ENCODE measurements at regions of chr15 and their contacts with region 1.

Region 1: DNA sequence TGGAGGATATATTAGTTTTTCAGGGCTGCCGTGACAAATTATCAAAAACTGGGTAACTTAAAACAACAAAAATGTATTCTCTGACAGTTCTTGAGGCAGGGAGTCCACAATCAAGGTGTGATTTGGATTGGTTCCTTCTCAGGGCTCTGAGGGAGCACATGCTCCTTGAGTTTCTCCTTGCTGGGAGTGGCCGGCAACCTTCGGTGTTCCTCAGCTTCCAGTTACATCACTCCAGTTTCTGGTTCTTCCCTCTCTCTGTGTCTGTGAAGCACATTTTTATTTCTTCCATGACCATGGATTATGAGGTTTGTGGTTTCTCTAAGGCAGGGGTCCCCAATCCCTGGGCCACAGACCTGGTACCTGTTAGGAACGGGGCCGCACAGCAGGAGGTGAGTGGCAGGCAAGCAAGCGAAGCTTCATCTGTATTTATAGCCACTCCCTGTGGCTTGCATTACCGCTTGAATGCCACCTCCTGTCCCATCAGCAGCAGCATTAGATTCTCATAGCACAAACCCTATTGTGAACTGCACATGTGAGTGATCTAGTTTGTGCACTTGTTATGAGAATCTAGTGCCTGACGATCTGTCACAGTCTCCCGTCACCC is 24.3 kb downstream of the LRRC28 start:
- DNase-seq: no peak
- H3K4me3 ChIP-seq: no peak overlapping the region
- H3K27me3 ChIP-seq: no peaks in the 10 kb centered on the region
- CTCF ChIP-seq: no peak

Region 2: GRCh38 chr15:99264125-99264524 is 11.5 kb before region 1 on chr15:
- CTCF ChIA-PET with region 1: interaction called, 35 read pairs
- POLR2A ChIA-PET with region 1: no interaction called
- DNase-seq: no peak
- H3K4me3 ChIP-seq: no peak overlapping the region
- H3K27me3 ChIP-seq: no peaks in the 10 kb centered on the region
- CTCF ChIP-seq: no peak

Region 3: DNA sequence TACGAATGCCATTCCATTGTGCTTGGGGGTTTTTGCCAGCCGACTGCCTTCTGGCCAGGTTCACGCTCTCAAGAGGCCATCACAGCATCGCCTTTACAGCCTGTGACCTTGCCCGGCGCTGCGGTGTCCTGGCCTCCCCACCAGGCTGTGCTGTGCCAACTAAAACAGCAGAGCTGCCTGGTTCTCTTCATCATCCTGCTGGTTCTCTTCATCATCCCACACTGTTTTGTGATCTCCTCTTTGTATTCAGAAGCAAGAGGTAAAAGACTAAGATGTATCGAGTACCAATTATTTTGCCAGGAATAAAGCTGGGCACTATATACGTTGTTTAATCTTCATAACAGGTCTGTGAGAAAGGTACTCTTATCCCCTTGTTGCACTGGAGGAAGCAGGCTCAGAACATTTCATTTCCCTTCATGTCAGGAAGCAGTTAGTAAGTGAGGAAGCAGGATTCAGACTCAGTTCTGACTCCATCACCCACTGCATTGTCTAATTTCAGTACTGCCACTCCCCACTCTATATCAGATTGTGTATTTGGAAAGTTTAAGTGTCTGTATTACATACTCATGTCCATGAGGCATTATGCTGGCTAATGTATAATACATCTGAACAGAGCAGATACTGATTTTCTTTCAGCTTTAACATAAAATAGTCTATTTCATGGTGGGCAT is 68.4 kb after region 1 on chr15:
- CTCF ChIA-PET with region 1: no interaction called
- POLR2A ChIA-PET with region 1: interaction called, 14 read pairs
- DNase-seq: no peak
- H3K4me3 ChIP-seq: no peak overlapping the region
- H3K27me3 ChIP-seq: no peaks in the 10 kb centered on the region
- CTCF ChIP-seq: no peak

Region 4: GRCh38 chr15:99755692-99756409 is 480.2 kb after region 1 on chr15:
- CTCF ChIA-PET with region 1: interaction called, 22 read pairs
- POLR2A ChIA-PET with region 1: no interaction called
- DNase-seq: no peak
- H3K4me3 ChIP-seq: no peak overlapping the region
- H3K27me3 ChIP-seq: no peaks in the 10 kb centered on the region
- CTCF ChIP-seq: peak; percentile 84